ENCODE measurements at regions of chr14 and their contacts with region 1.

Region 1: GRCh38 chr14:81464247-81465002 is 64.3 kb upstream of the STON2 start:
- DNase-seq: peak; percentile 93
- H3K4me3 Mint-ChIP-seq: peak overlapping the region; percentile 85
- H3K27ac Mint-ChIP-seq: peak overlapping the region; percentile 85
- H3K4me1 Mint-ChIP-seq: peaks cover 6% of the 10 kb centered on the region
- H3K27me3 Mint-ChIP-seq: no peaks in the 10 kb centered on the region

Region 2: GRCh38 chr14:80996049-80996901 is 468.1 kb before region 1 on chr14:
- intact Hi-C with region 1: loop called (anchors 5 kb)
- DNase-seq: peak; percentile 80
- H3K4me3 Mint-ChIP-seq: no peak overlapping the region
- H3K27ac Mint-ChIP-seq: no peak overlapping the region
- H3K4me1 Mint-ChIP-seq: peaks cover 5% of the 10 kb centered on the region
- H3K27me3 Mint-ChIP-seq: peaks cover 49% of the 10 kb centered on the region

Region 3: DNA sequence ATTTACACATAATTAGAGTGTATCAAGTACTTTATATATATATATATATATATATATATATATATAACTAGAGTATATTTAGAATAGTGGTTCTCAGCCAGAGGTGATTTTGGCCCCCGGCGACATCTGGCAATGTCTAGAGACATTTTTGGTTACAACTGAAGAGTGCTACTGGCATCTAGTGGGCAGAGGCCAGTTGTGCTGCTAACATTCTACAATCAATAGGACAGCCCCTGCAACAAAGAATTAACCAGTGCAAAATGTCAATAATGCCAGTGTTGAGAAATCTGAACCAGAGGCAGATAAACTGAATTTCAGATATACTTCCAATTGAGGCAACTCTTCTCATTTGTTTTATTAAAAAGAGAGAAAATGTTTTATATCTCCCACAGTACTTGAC is 252.6 kb before region 1 on chr14:
- intact Hi-C with region 1: loop called (anchors 2 kb)
- DNase-seq: peak; percentile 76
- H3K4me3 Mint-ChIP-seq: no peak overlapping the region
- H3K27ac Mint-ChIP-seq: peak overlapping the region; percentile 17
- H3K4me1 Mint-ChIP-seq: peaks cover 26% of the 10 kb centered on the region
- H3K27me3 Mint-ChIP-seq: no peaks in the 10 kb centered on the region

Region 4: DNA sequence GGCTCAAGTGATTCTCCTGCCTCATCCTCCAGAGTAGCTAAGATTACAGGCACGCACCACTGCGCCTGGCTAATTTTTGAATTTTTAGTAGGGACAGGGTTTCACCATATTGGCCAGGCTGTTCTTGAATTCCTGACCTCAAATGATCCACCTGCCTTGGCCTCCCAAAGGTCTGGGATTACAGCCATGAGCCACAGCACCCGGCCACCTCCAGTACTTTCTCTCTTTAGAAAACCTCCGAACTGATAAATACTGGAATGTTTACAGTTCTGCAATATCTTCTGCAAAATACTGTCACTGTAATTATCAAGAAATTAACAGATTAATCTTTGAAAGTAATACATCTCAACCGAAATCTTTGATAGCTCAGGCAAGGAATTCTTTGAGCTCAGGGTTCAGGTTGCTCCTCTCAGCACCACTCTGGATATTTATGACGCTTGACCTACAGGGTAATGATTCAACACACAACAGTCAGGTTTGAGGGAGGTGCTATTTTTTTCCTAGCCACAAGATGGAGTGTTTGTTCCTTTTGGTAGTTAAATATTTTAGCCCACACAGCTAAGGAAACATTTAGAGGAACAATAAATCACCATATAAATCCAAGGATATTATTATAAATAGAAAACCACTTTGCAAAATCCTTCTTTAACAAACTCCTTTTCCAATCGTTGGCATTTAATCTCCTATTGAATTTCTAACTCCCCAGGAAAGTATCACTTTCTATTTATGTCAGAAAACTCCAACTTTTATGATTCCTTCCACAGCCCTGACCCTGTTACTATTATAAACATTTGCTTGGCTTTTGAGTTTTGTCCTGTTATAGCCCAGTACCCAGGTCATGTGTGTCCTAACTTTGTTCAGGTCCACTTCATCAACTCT is 195.1 kb before region 1 on chr14:
- intact Hi-C with region 1: loop called (anchors 1 kb)
- DNase-seq: peak; percentile 73
- H3K4me3 Mint-ChIP-seq: no peak overlapping the region
- H3K27ac Mint-ChIP-seq: no peak overlapping the region
- H3K4me1 Mint-ChIP-seq: peaks cover 11% of the 10 kb centered on the region
- H3K27me3 Mint-ChIP-seq: peaks cover 24% of the 10 kb centered on the region

Measured in activated CD4-positive, alpha-beta T cell treated with anti-CD3 and anti-CD28 coated beads, Interleukin-2, amount 10 ng/mL, durations not matched to agents 24 days and 14 days (primary cell).